ENCODE measurements at regions of chr20 and their contacts with region 1.

Region 1: DNA sequence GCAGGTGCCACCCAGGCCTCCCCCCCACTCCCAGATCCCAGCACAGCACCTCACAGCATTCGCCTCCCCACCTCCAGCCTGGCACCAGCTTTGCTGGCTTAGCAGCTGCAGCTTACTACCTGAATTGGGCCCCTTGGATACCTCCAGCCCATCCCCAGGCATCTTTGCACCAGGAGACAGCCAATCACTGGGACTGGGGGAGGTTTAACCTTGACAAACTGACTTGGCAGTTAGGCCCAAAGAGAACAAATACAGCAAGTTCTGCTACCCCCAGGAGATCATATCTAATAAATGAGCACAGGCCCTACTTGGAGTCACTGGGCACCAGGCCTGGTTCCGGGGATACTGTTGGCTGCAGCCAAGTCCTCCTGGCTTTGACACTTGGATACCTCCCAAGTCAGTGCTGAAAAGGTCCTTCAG is 8.8 kb downstream of the PDRG1 start:
- DNase-seq: peak; percentile 24 to 66

Region 2: DNA sequence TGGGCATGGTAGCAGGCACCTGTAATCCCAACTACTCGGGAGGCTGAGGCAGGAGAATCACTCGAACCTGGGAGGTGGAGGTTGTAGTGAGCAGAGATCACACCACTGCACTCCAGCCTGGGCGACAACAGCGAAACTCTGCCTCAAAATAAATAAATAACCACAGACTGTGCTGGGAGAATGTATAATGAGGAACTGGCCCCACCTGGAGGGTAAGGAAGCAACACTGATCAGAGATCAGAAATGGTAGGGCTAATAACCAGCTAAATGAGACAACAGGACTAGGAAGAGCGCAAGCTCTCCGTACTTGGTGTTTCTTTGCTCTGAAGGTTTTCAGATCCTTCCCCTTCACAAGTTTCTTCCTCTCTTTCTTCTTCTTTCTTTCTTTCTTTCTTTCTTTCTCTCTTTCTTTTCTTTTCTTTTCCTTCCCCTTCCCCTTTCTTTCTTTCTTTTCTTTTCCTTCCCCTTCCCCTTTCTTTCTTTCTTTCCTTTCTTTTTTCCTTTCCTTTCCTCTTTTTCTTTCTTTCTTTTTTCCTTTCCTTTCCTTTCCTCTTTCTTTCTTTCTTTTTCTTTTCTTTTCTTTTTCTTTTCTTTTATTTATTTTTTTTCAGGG is 81.7 kb after region 1 on chr20:
- in situ Hi-C with region 1: loop called (anchors 5 kb)
- DNase-seq: no peak